ENCODE measurements at regions of chrX and their contacts with region 1.

Region 1: DNA sequence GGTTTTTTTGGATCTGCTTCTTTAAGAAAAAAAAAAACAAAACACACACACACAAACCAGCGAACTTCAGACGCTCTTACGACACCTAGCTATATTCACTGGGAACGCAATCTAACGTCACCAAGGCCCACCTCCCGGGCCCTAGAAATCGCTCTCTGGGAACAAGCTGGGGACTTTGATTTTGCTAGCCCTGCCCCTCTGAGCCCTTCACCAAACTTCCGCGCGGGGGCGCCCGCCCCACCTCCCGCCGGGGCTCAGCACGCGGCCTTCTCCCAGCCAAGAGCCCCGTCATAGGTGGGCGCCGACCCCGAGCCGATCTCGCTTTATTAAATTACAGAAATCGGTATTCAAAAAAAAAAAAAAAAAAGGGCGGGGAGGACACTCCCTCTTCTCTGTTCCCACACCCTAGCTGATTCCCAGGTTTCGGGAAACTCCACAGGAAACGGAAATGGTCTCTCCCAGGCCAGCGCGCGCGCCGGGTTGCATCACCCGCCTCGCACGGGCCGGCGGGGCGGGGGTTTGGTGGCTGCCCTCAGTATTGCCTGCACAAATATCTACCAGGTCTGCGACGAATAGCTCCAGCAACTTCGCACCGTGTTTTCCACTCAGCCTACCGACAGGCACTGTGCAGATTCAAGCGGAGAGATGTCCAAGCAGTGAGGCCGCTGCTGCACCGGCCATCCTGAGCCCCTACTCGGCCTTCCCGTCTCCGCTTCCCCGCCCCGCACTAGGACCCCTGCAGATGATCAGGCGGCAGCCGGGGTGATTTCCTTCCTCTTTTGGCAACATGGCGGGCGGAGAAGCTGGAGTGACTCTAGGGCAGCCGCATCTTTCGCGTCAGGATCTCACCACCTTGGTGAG is at the start of gene EIF2S3:
- DNase-seq: peak; percentile 94
- H3K4me3 ChIP-seq: peak within 1 kb of the TSS; percentile 96
- H3K27ac ChIP-seq: peak within 1 kb of the TSS; percentile 75
- H3K4me1 ChIP-seq: peaks cover 5% of the 10 kb centered on the region
- H3K27me3 ChIP-seq: no peaks in the 10 kb centered on the region
- CTCF ChIP-seq: peak; percentile 71
- total RNA-seq, gene EIF2S3: 166 to 180 TPM

Region 2: DNA sequence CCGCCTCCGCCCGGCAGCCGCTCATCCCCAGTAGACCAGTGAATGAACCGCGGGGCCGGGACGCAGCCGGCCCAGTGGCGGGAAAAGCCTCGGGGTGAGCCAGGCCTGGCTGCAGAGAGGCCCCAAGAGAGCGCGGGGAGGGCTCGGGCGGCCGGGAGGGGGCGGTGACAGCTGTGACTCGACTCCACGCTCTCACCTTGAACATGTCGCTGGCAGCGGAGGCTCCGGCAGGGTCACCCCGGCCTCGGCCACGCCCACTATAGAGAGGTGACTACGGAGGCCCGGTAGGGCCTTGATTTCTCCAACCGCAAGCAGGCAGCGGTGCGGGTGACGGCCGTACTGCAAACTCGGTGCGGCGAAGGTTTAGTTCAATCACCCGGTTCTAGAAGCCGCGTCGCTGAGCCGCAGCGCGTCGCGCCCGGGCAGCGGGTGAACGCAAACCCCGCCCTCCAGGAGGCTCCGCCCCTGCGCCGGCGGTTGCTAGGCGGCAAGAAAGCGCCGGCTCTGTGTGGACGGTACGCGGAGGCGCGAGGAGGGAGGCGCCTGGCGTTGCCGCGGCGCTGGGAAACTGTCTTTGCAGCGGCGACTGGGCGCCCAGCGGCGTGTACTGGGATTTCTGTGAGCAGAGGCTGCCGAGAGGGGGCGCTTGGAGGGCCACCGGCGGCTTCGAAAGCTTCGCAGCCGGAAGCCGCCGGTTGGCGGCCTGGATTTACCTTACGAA is 146.8 kb before region 1 on chrX and contains the starts of genes APOO and CXorf58:
- intact Hi-C with region 1: loop called (anchors 5 kb)
- DNase-seq: peak; percentile 88
- H3K4me3 ChIP-seq: peak within 1 kb of the TSS; percentile 49
- H3K27ac ChIP-seq: peak within 1 kb of the TSS; percentile 77
- H3K4me1 ChIP-seq: no peaks in the 10 kb centered on the region
- H3K27me3 ChIP-seq: no peaks in the 10 kb centered on the region
- CTCF ChIP-seq: peak; percentile 58
- total RNA-seq, gene APOO: 36.3 to 38.9 TPM
- total RNA-seq, gene CXorf58: not detected

Region 3: DNA sequence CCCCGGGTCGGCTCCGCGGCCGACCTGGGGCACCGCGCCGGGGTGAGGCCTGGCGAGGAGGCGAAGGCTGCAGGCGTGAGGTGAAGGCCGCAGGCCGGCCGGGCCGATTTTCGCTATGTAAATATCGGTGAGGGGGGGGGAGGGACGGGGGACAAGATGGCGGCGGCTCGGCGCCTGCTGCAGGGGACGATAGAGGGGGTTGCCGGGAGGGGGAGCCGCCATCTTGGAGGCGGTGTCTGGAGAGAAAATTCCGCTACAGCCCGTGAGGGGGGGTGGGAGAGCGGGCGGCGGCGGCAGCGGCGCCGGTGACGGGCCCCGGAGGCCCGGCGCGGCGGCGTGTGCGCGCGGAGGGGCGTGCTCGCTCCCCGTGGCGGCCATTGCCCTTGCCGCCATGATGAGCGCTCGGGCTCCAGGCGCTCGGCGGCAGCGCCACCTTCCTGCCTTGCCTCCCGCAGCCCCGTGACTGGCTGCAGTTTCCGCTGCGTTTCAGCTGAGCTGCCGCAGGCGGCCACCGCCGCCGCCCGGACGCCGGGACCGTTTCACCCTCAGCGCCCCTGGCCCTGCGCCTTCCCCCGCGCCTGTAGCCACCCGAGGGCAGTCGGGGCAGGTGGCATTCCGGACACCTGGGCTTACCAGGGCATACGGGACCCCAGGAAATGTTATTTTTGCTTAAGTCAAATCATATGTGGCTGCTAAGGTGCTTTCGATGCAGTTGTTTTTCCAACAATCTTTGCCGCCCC is 95.8 kb after region 1 on chrX:
- intact Hi-C with region 1: loop called (anchors 10 kb)
- DNase-seq: peak; percentile 93
- H3K4me3 ChIP-seq: peak overlapping the region; percentile 64
- H3K27ac ChIP-seq: peak overlapping the region; percentile 96
- H3K4me1 ChIP-seq: peaks cover 7% of the 10 kb centered on the region
- H3K27me3 ChIP-seq: no peaks in the 10 kb centered on the region
- CTCF ChIP-seq: peak; percentile 33

Region 4: DNA sequence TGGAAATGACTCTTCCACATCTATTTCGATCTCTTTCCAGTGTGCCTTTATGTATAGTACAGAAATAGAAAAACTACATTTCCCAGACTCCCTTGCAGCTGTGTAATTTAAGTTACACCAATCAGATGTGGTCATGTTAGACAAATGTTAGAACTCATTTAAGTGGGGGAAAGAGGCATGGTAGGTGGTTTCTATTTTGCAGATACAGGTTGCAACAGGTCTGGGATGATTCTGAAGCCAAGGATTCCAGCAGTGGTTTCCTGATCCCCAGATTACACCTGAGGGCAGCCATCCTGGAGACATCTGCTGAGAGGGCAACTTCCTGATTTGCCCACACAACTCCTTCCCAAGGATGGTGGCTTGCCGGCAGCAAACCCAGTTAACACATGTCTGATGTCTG is 372.0 kb after region 1 on chrX:
- intact Hi-C with region 1: no loop called
- DNase-seq: no peak
- H3K4me3 ChIP-seq: no peak overlapping the region
- H3K27ac ChIP-seq: peak overlapping the region; percentile 59
- H3K4me1 ChIP-seq: no peaks in the 10 kb centered on the region
- H3K27me3 ChIP-seq: no peaks in the 10 kb centered on the region
- CTCF ChIP-seq: no peak